GM12878 (cell line): ENCODE measurements at regions of chr14 and their contacts with region 1.

Region 1: DNA sequence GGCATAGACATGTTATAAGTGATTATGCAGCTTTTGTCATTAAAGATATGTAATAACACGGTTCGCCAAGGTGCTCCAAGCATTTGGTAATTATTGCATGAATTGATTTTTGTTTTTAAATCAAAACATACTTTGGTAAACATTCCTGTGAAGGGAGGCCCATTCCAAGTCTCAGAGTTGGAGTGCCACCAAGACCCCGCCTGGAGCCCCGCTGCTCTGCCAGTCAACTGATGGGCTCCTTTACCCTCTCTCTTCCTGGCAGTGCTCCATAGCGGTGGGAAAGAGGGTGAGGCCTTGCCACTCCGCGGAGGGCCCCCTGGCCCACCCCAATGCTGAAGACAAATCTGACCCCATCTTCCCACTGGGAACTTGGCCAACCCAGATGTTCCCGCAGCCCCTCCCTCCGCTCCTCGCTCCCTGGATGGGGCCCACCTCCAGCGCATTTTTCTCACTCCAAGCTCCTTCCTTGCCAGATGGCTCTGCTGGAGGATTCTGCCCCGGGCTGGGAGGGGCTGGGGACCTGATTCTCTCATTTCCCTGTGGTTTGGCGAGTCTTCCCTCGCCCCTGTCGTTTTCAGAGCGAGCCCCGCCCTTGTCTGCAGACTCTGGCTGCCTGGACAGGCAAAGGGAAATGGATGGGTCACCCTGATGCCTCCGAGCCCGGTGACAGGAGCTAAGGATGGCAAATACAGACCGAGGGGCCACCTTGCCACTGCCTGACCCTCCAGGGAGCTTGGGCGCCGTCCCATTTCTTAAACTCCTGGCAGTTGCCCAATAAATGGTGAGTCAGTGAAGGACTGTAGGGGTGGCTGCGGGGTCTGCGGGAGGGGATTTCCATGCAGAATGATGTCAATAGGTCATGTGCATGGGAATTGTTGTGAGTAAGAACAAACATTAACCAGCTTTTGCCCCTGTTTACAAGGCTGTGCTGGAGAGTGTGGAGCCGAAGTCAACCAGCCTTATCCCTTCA is 9.2 kb upstream of the PAPLN start:
- DNase-seq: no peak
- ATAC-seq: peak; percentile 24
- H3K4me3 ChIP-seq: no peak overlapping the region
- H3K27ac ChIP-seq: no peak overlapping the region
- H3K4me1 ChIP-seq: peaks cover 8% of the 10 kb centered on the region
- H3K27me3 ChIP-seq: no peaks in the 10 kb centered on the region
- CTCF ChIP-seq: no peak
- EP300 ChIP-seq: no peak
- POLR2A ChIP-seq: no peak
- RAD21 ChIP-seq: no peak

Region 2: GRCh38 chr14:73166399-73166798 is 61.7 kb before region 1 on chr14:
- CTCF ChIA-PET with region 1: no interaction called
- POLR2A ChIA-PET with region 1: no interaction called
- RAD21 ChIA-PET with region 1: no interaction called
- SMC1A ChIA-PET with region 1: no interaction called
- in situ Hi-C with region 1: no loop called
- intact Hi-C with region 1: no loop called
- DNase-seq: no peak
- ATAC-seq: no peak
- H3K4me3 ChIP-seq: no peak overlapping the region
- H3K27ac ChIP-seq: no peak overlapping the region
- H3K4me1 ChIP-seq: no peaks in the 10 kb centered on the region
- H3K27me3 ChIP-seq: no peaks in the 10 kb centered on the region
- CTCF ChIP-seq: no peak
- EP300 ChIP-seq: no peak
- POLR2A ChIP-seq: no peak
- RAD21 ChIP-seq: no peak

Region 3: DNA sequence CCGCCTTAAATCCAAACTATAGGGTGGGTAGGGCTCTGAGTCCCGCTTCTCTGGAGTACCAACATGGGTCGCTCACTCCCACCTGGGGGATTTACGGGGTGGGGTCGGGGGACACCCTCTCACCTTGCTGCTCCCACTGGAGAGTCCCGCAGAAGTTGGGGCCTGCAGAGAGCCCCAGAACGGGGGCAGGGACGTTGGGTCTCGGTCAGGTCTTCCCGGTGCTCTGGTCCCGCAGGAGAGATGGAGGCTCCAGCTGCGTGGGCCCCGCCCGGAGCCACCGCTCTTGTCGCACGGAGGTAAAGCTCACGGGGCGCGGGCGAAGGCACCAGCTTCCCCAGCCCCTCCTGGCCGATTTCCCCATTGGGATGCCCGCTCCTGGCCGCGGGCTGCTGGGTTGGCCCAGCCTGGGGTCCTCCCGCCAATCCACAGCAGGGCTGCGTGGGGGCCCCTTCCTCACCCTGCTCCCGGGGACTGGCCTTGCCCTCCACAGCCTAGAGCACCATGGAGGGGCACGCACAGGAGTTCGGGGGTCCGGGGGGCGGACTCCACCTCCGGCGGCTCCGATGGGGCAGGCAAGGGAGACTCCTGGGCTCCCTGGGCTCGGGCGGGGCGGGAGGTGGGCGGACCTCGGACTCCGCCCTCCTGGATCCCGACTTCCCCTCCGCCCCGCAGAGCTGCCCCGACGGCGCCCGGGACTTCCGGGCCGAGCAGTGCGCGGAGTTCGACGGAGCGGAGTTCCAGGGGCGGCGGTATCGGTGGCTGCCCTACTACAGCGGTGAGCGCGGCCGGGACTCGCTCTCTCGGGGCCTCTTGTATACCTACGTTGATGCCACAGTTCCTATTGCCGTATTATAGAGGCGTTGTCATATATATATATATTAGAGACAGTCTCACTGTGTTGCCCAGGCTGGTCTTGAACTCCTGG is 17.6 kb after region 1 on chr14:
- CTCF ChIA-PET with region 1: interaction called, 7 read pairs
- POLR2A ChIA-PET with region 1: interaction called, 5 read pairs
- RAD21 ChIA-PET with region 1: interaction called, 9 read pairs
- SMC1A ChIA-PET with region 1: interaction called, 12 read pairs
- in situ Hi-C with region 1: no loop called
- intact Hi-C with region 1: no loop called
- DNase-seq: no peak
- ATAC-seq: peak; percentile 71
- H3K4me3 ChIP-seq: peak overlapping the region; percentile 66
- H3K27ac ChIP-seq: peak overlapping the region; percentile 15
- H3K4me1 ChIP-seq: peaks cover 58% of the 10 kb centered on the region
- H3K27me3 ChIP-seq: no peaks in the 10 kb centered on the region
- CTCF ChIP-seq: no peak
- EP300 ChIP-seq: no peak
- POLR2A ChIP-seq: peak; percentile 71
- RAD21 ChIP-seq: no peak